CD4-positive, alpha-beta memory T cell (primary cell): ENCODE measurements at regions of chr6 and their contacts with region 1.

Region 1: GRCh38 chr6:159720708-159721107 is 6.6 kb upstream of the WTAP start:
- DNase-seq: peak; percentile 62 to 72 (median 65)
- H3K4me3 ChIP-seq: no peak overlapping the region
- H3K4me3 Mint-ChIP-seq: no peak overlapping the region
- H3K27ac ChIP-seq: no peak overlapping the region
- H3K27ac Mint-ChIP-seq: peak overlapping the region in 1 of 7 donors; percentile 35
- H3K4me1 ChIP-seq: peaks cover 21% of the 10 kb centered on the region
- H3K4me1 Mint-ChIP-seq: peaks cover 4 to 19% (median 16%) of the 10 kb centered on the region in 4 donors
- H3K27me3 ChIP-seq: no peaks in the 10 kb centered on the region
- H3K27me3 Mint-ChIP-seq: no peaks in the 10 kb centered on the region

Region 2: GRCh38 chr6:159701411-159701999 is 19.2 kb before region 1 on chr6:
- CTCF ChIA-PET with region 1: interaction called, 20 read pairs
- POLR2A ChIA-PET with region 1: interaction called, 240 read pairs
- intact Hi-C with region 1: no loop called
- DNase-seq: no peak
- H3K4me3 ChIP-seq: no peak overlapping the region
- H3K4me3 Mint-ChIP-seq: no peak overlapping the region
- H3K27ac ChIP-seq: no peak overlapping the region
- H3K27ac Mint-ChIP-seq: no peak overlapping the region
- H3K4me1 ChIP-seq: no peaks in the 10 kb centered on the region
- H3K4me1 Mint-ChIP-seq: peaks cover 2 to 8% (median 4%) of the 10 kb centered on the region in 4 donors
- H3K27me3 ChIP-seq: no peaks in the 10 kb centered on the region
- H3K27me3 Mint-ChIP-seq: no peaks in the 10 kb centered on the region

Region 3: GRCh38 chr6:159852877-159853276 is 132.2 kb after region 1 on chr6:
- CTCF ChIA-PET with region 1: interaction called, 59 read pairs
- POLR2A ChIA-PET with region 1: interaction called, 3 read pairs
- intact Hi-C with region 1: loop called (anchors 1 kb)
- DNase-seq: peak in 4 of 5 donors; percentile 19 to 38 (median 30)
- H3K4me3 ChIP-seq: no peak overlapping the region
- H3K4me3 Mint-ChIP-seq: no peak overlapping the region
- H3K27ac ChIP-seq: no peak overlapping the region
- H3K27ac Mint-ChIP-seq: no peak overlapping the region
- H3K4me1 ChIP-seq: no peaks in the 10 kb centered on the region
- H3K4me1 Mint-ChIP-seq: no peaks in the 10 kb centered on the region
- H3K27me3 ChIP-seq: no peaks in the 10 kb centered on the region
- H3K27me3 Mint-ChIP-seq: peaks cover 0 to 1% of the 10 kb centered on the region in 2 donors

Region 4: GRCh38 chr6:159941286-159942113 is 220.8 kb after region 1 on chr6:
- CTCF ChIA-PET with region 1: interaction called, 45 read pairs
- POLR2A ChIA-PET with region 1: no interaction called
- intact Hi-C with region 1: no loop called
- DNase-seq: peak; percentile 50 to 66 (median 58)
- H3K4me3 ChIP-seq: no peak overlapping the region
- H3K4me3 Mint-ChIP-seq: no peak overlapping the region
- H3K27ac ChIP-seq: no peak overlapping the region
- H3K27ac Mint-ChIP-seq: no peak overlapping the region
- H3K4me1 ChIP-seq: no peaks in the 10 kb centered on the region
- H3K4me1 Mint-ChIP-seq: peaks cover 0 to 2% (median 0%) of the 10 kb centered on the region in 4 donors
- H3K27me3 ChIP-seq: no peaks in the 10 kb centered on the region
- H3K27me3 Mint-ChIP-seq: peaks cover 1 to 2% of the 10 kb centered on the region in 2 donors